Right cardiac atrium (tissue), 5 donors: ENCODE measurements at regions of chr6 and their contacts with region 1.

Region 1: DNA sequence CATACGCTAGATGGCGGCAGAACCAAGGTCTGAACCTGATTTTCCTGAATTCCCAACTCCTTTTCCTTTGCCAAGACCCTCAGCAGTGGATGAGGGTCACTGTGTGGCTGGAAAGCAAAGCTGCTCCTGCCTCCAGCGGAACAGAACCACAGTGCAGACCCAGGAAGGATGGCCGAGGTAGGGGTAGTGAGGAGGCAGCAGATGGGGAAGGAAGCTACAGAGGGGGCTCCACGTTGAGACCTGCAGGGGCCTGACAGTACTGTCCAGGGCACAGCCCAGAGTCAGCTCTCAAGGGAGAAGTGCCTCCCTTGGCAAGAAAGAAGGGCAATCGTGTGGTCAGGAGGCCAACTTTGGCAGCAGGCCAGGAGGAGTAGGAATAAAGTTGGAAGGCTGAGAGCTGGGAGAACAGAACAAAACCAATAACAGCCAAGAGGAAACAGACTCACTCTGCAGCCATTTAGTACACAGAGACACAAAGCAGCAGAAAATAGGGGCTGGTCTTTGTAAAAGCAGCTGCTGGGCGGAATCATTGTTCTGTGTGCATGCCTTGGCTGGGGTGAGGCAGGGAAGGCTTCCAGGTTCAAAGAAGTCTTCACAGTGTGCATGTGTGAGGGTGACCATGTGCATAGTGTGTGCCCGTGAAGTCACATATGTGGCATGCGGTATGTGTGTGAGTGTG is 3.1 kb downstream of the GABRR2 start:
- DNase-seq: peak; percentile 68 to 88 (median 83)
- ATAC-seq: peak; percentile 75 to 84
- H3K4me3 ChIP-seq: no peak overlapping the region
- H3K27ac ChIP-seq: peak overlapping the region; percentile 29
- H3K4me1 ChIP-seq: peaks cover 13% of the 10 kb centered on the region
- H3K27me3 ChIP-seq: no peaks in the 10 kb centered on the region

Region 2: GRCh38 chr6:89368107-89368506 is 56.1 kb after region 1 on chr6:
- intact Hi-C with region 1: loop called in 2 of 4 experiments (anchors 5 to 10 kb)
- DNase-seq: peak; percentile 61 to 84 (median 62)
- ATAC-seq: peak; percentile 59 to 60
- H3K4me3 ChIP-seq: no peak overlapping the region
- H3K27ac ChIP-seq: no peak overlapping the region
- H3K4me1 ChIP-seq: no peaks in the 10 kb centered on the region
- H3K27me3 ChIP-seq: no peaks in the 10 kb centered on the region

Region 3: GRCh38 chr6:90226257-90226656 is 914.3 kb after region 1 on chr6:
- intact Hi-C with region 1: no loop called
- DNase-seq: no peak
- ATAC-seq: peak in 1 of 2 donors; percentile 23
- H3K4me3 ChIP-seq: no peak overlapping the region
- H3K27ac ChIP-seq: no peak overlapping the region
- H3K4me1 ChIP-seq: peaks cover 4% of the 10 kb centered on the region
- H3K27me3 ChIP-seq: no peaks in the 10 kb centered on the region